Activated CD8-positive, alpha-beta T cell treated with anti-CD3 and anti-CD28 coated beads for 36 hours (primary cell): ENCODE measurements at regions of chr3 and their contacts with region 1.

Region 1: GRCh38 chr3:45948311-45948781 is 5.1 kb downstream of the CXCR6 start:
- DNase-seq: no peak
- ATAC-seq: no peak
- H3K4me3 Mint-ChIP-seq: no peak overlapping the region
- H3K27ac Mint-ChIP-seq: peak overlapping the region; percentile 74
- H3K4me1 Mint-ChIP-seq: peaks cover 66% of the 10 kb centered on the region
- H3K27me3 Mint-ChIP-seq: no peaks in the 10 kb centered on the region
- CTCF ChIP-seq: no peak

Region 2: DNA sequence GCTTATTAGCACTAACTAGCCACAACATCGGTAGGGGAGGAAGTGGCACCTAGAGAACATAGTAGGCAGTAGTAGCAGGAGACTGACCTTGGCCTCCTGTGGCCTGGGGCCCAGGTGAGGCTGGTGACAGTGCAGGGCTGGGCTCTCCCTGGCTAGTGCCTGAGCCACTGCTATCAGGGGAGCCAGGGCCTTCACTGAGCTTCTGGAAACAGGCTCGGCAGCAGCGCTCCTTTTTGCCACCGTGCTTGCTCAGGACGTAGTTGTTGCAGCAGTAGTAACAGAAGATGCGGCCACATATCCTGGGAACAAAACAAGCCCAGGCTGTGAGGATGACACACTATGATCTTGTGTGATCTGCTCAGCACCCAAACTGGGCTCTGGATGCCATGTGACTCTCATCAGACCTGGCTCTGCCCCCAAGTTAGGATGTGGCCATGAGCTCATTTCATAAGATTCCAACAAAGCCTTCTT is 10.0 kb after region 1 on chr3:
- CTCF ChIA-PET with region 1: interaction called, 28 read pairs
- POLR2A ChIA-PET with region 1: interaction called, 17 read pairs
- intact Hi-C with region 1: loop called (anchors 2 kb)
- DNase-seq: no peak
- ATAC-seq: no peak
- H3K4me3 Mint-ChIP-seq: no peak overlapping the region
- H3K27ac Mint-ChIP-seq: peak overlapping the region; percentile 44
- H3K4me1 Mint-ChIP-seq: peaks cover 31% of the 10 kb centered on the region
- H3K27me3 Mint-ChIP-seq: no peaks in the 10 kb centered on the region
- CTCF ChIP-seq: no peak

Region 3: DNA sequence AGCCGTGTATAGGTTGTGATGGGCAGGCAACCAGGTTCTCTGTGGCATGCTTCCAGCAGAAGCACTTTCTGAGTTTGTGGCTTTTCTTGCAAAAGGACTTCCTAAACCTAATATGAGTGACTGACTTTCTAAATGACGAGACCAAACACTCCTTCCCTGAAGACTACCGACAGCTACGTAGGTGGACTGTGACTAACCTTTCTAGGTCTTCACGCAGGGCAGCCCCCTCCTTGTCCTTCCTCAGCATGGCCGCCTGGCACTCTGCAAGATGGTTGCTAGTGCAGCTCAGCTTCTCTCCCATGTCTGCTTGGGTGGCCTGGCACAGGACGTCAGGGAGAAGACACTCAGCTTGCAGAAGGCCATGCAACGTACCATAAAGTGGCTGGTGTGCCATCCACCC is 15.8 kb after region 1 on chr3:
- CTCF ChIA-PET with region 1: interaction called, 28 read pairs
- POLR2A ChIA-PET with region 1: interaction called, 17 read pairs
- intact Hi-C with region 1: loop called (anchors 2 kb)
- DNase-seq: peak; percentile 84
- ATAC-seq: peak; percentile 88
- H3K4me3 Mint-ChIP-seq: no peak overlapping the region
- H3K27ac Mint-ChIP-seq: peak overlapping the region; percentile 82
- H3K4me1 Mint-ChIP-seq: peaks cover 65% of the 10 kb centered on the region
- H3K27me3 Mint-ChIP-seq: no peaks in the 10 kb centered on the region
- CTCF ChIP-seq: no peak

Region 4: DNA sequence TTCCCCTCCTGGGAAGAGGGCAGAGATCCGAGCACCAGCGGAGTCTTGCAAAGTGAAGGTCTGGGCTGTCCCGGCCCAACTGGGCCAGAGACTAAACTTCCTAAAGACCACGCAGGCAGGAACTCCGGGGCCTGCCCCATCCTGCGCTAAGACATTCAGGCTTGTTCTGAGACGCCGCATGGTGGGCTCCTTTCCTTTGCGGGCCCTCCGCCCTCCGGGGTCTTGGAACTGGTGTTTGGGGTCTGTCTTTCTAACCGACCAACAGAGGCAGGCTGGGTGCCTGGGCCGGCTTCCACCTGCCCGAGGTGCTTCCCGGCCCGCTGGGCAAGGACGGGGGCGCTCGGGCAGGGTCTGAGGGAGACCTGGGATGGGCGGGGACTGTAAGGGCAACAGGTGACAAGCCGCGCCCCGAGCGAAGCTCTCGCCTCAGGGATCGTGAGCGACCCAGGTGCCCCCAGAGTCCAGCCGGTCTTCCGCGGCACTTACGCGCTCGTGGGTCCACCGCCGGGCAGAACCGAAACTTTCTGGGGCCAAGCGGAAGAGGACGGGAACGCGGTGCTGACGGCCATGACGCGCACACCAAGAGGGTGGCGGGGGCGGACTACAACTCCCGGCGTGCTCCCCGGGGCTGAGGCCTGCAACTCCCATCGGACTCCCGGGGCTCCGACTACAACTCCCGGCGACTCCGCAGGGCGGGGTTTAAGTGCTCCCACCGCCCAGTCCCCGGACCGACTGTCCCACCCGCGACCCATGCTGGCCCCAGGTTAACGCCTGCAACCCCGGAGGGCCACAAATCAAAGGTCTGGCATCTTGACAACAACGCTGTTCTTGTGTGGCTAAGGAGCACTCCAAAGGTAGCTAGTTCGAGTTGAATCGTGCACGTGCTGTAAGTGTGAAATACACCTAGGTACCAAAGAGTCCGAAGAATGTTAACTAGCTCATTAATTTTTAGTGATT is 47.2 kb after region 1 on chr3 and contains the start of gene FYCO1:
- CTCF ChIA-PET with region 1: interaction called, 4 read pairs
- POLR2A ChIA-PET with region 1: interaction called, 17 read pairs
- intact Hi-C with region 1: no loop called
- DNase-seq: peak; percentile 96
- ATAC-seq: peak; percentile 82
- H3K4me3 Mint-ChIP-seq: peak within 1 kb of the TSS; percentile 83
- H3K27ac Mint-ChIP-seq: peak within 1 kb of the TSS; percentile 91
- H3K4me1 Mint-ChIP-seq: peaks cover 46% of the 10 kb centered on the region
- H3K27me3 Mint-ChIP-seq: peaks cover 4% of the 10 kb centered on the region
- CTCF ChIP-seq: no peak
- total RNA-seq, gene FYCO1: 14.1 to 14.5 TPM